HepG2 (cell line): ENCODE measurements at regions of chr21 and their contacts with region 1.

Region 1: DNA sequence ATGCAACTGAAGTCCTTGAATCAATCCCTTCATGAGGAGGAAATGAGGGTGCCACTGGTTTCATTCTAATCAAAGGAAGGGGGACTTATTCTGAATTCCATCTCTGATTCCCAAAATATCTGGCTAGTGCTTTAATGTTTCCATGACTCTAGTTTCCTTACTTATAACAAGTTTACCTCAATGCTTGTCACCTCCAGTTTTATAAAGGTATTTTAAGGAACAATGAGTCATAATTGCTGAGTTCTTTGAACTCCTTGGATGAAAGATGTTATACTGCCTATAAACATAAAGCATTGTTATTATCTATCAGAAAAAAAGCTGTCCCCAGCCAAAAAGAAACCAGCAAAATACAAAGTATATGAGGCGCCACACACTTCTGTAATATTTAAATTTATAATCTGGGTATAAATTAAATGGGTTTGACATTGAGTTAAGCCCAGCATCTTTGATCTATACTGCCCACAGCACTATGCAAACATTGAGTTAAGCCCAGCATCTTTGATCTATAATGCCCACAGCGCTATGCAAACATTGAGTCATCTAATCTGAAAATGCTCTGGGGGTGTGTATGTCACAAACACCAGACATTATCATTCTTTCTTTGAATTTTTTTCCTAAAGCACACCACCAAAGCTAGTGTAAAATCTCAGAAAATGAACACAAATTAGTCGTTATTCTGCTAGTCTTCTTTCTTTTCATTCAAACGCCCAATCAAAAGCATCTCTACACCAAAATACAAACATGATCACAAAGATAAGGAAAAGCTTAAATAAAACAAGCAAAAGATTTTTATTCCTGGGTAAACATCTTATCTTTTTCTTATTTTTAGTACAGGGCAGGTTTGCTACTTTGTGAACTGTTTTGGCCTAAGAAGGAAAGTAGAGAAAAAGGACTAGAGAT is 11.5 kb upstream of the CXADR start:
- DNase-seq: peak; percentile 98
- ATAC-seq: peak; percentile 99
- H3K4me3 ChIP-seq: peak overlapping the region in 2 of 3 experiments; percentile 9 to 18; a peak in 2 of 6 replicates
- H3K27ac ChIP-seq: peak overlapping the region; percentile 78
- H3K4me1 ChIP-seq: peaks cover 70% of the 10 kb centered on the region
- H3K27me3 ChIP-seq: no peaks in the 10 kb centered on the region
- CTCF ChIP-seq: no peak
- EP300 ChIP-seq: peak; percentile 98 to 100
- POLR2A ChIP-seq: no peak
- RAD21 ChIP-seq: no peak

Region 2: DNA sequence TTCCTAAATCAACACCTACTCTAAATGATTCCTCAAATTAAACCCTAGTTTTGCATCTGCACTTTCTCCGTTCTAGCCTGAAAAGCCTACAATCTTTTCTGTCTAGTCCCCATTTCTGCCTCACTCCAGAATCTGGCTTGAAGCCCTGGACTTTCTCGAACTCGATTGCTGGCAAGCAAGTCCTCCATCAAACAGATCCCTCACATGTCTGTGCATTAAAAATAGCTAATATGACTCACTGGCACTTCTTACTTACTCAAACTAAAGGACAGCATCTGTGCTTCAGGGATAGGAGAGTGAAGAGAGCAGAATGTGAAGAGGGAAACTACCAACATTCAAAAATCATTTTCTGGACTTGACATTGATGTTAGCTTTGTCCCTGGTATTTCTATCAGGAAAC is 40.3 kb before region 1 on chr21:
- CTCF ChIA-PET with region 1: no interaction called
- POLR2A ChIA-PET with region 1: no interaction called
- in situ Hi-C with region 1: loop called (anchors 5 kb)
- intact Hi-C with region 1: loop called (anchors 1 kb)
- DNase-seq: no peak
- ATAC-seq: no peak
- H3K4me3 ChIP-seq: no peak overlapping the region
- H3K27ac ChIP-seq: peak overlapping the region; percentile 80
- H3K4me1 ChIP-seq: peaks cover 45% of the 10 kb centered on the region
- H3K27me3 ChIP-seq: no peaks in the 10 kb centered on the region
- CTCF ChIP-seq: no peak
- EP300 ChIP-seq: no peak
- POLR2A ChIP-seq: no peak
- RAD21 ChIP-seq: no peak

Region 3: GRCh38 chr21:17472592-17473271 is 28.6 kb before region 1 on chr21:
- CTCF ChIA-PET with region 1: no interaction called
- POLR2A ChIA-PET with region 1: interaction called, 8 read pairs
- in situ Hi-C with region 1: no loop called
- intact Hi-C with region 1: loop called (anchors 1 kb)
- DNase-seq: peak; percentile 99
- ATAC-seq: peak; percentile 92
- H3K4me3 ChIP-seq: peak overlapping the region in 1 of 3 experiments; percentile 37; a peak in 1 of 6 replicates
- H3K27ac ChIP-seq: peak overlapping the region; percentile 94
- H3K4me1 ChIP-seq: peaks cover 85% of the 10 kb centered on the region
- H3K27me3 ChIP-seq: no peaks in the 10 kb centered on the region
- CTCF ChIP-seq: no peak
- EP300 ChIP-seq: peak; percentile 88 to 94
- POLR2A ChIP-seq: no peak
- RAD21 ChIP-seq: no peak

Region 4: GRCh38 chr21:17527240-17527639 is 25.9 kb after region 1 on chr21:
- CTCF ChIA-PET with region 1: no interaction called
- POLR2A ChIA-PET with region 1: interaction called, 4 read pairs
- in situ Hi-C with region 1: no loop called
- intact Hi-C with region 1: loop called (anchors 1 kb)
- DNase-seq: peak; percentile 83
- ATAC-seq: peak; percentile 36
- H3K4me3 ChIP-seq: no peak overlapping the region
- H3K27ac ChIP-seq: peak overlapping the region; percentile 58
- H3K4me1 ChIP-seq: peaks cover 98% of the 10 kb centered on the region
- H3K27me3 ChIP-seq: no peaks in the 10 kb centered on the region
- CTCF ChIP-seq: no peak
- EP300 ChIP-seq: peak in 1 of 2 experiments; percentile 69; a peak in 2 of 4 replicates
- POLR2A ChIP-seq: no peak
- RAD21 ChIP-seq: no peak